ENCODE measurements at regions of chr2 and their contacts with region 1.

Region 1: GRCh38 chr2:146661473-146662096 is 1183.2 kb upstream of the ACVR2A start:
- DNase-seq: no peak
- H3K4me3 Mint-ChIP-seq: no peak overlapping the region
- H3K27ac Mint-ChIP-seq: no peak overlapping the region
- H3K4me1 Mint-ChIP-seq: peaks cover 27% of the 10 kb centered on the region
- H3K27me3 Mint-ChIP-seq: no peaks in the 10 kb centered on the region
- CTCF ChIP-seq: peak; percentile 44

Region 2: GRCh38 chr2:146385031-146385430 is 276.6 kb before region 1 on chr2:
- CTCF ChIA-PET with region 1: no interaction called
- intact Hi-C with region 1: no loop called
- DNase-seq: no peak
- H3K4me3 Mint-ChIP-seq: no peak overlapping the region
- H3K27ac Mint-ChIP-seq: no peak overlapping the region
- H3K4me1 Mint-ChIP-seq: no peaks in the 10 kb centered on the region
- H3K27me3 Mint-ChIP-seq: no peaks in the 10 kb centered on the region
- CTCF ChIP-seq: no peak

Region 3: GRCh38 chr2:146523196-146523595 is 138.4 kb before region 1 on chr2:
- CTCF ChIA-PET with region 1: no interaction called
- intact Hi-C with region 1: loop called (anchors 1 kb)
- DNase-seq: no peak
- H3K4me3 Mint-ChIP-seq: no peak overlapping the region
- H3K27ac Mint-ChIP-seq: no peak overlapping the region
- H3K4me1 Mint-ChIP-seq: no peaks in the 10 kb centered on the region
- H3K27me3 Mint-ChIP-seq: no peaks in the 10 kb centered on the region
- CTCF ChIP-seq: peak; percentile 27

Region 4: GRCh38 chr2:146561996-146562395 is 99.6 kb before region 1 on chr2:
- CTCF ChIA-PET with region 1: no interaction called
- intact Hi-C with region 1: no loop called
- DNase-seq: no peak
- H3K4me3 Mint-ChIP-seq: no peak overlapping the region
- H3K27ac Mint-ChIP-seq: no peak overlapping the region
- H3K4me1 Mint-ChIP-seq: no peaks in the 10 kb centered on the region
- H3K27me3 Mint-ChIP-seq: no peaks in the 10 kb centered on the region
- CTCF ChIP-seq: no peak

Region 5: GRCh38 chr2:146579147-146579930 is 82.2 kb before region 1 on chr2:
- CTCF ChIA-PET with region 1: no interaction called
- intact Hi-C with region 1: loop called (anchors 5 kb)
- DNase-seq: no peak
- H3K4me3 Mint-ChIP-seq: no peak overlapping the region
- H3K27ac Mint-ChIP-seq: peak overlapping the region; percentile 68
- H3K4me1 Mint-ChIP-seq: peaks cover 18% of the 10 kb centered on the region
- H3K27me3 Mint-ChIP-seq: no peaks in the 10 kb centered on the region
- CTCF ChIP-seq: no peak

Region 6: GRCh38 chr2:146677280-146677679 is 15.7 kb after region 1 on chr2:
- CTCF ChIA-PET with region 1: no interaction called
- intact Hi-C with region 1: no loop called
- DNase-seq: peak; percentile 6
- H3K4me3 Mint-ChIP-seq: no peak overlapping the region
- H3K27ac Mint-ChIP-seq: no peak overlapping the region
- H3K4me1 Mint-ChIP-seq: no peaks in the 10 kb centered on the region
- H3K27me3 Mint-ChIP-seq: no peaks in the 10 kb centered on the region
- CTCF ChIP-seq: peak; percentile 23